ENCODE measurements at regions of chr10 and their contacts with region 1.

Region 1: DNA sequence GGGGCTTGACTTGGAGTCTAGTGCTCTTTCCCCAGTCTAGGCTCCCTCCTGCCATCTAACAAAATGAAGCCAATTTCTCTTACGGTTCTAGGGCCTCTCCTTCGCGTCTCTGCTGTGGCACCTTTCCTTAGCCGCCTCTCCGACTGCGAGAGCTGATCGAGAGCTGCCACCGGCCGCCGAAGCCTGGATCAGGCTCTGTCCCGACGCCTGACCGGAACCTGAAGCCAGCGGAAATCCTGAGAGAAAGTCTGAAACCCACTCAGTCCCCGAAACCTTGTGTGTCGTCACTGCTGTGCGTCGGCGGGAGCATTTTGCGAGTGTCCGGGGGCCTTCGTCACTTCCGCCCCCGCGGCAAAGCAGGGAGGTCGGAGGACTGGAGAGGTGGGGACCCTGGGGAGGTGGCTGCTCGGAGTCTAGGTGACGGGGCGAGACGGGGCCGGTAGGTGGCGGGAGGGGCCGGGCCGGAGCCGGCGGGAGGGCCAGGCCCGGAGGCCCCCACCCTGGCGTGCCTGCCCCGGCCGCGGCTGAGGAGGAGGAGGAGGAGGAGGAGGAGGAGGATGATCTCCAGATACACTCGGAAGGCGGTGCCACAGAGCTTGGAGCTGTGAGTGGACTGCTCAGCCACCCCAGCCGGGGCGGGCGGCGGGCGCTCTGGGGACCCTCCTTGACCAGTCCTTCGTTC is at the starts of genes ECD and FAM149B1:
- DNase-seq: peak; percentile 88 to 96 (median 93)
- H3K4me3 ChIP-seq: peak within 1 kb of the TSS; percentile 67 to 100 (median 94)
- H3K27ac ChIP-seq: peak within 1 kb of the TSS; percentile 75 to 98 (median 94)
- H3K27me3 ChIP-seq: no peaks in the 10 kb centered on the region
- CTCF ChIP-seq: peak in 44 of 56 donors; percentile 4 to 56 (median 34)
- total RNA-seq, gene ECD: 25.0 to 44.1 (median 33.4) TPM
- total RNA-seq, gene FAM149B1: 21.7 to 41.9 (median 29.3) TPM

Region 2: GRCh38 chr10:72354478-72355213 is 813.3 kb before region 1 on chr10 and contains the start of gene DNAJB12:
- intact Hi-C with region 1: loop called in 1 of 2 experiments (anchors 10 kb)
- DNase-seq: peak; percentile 79 to 93 (median 88)
- H3K4me3 ChIP-seq: peak within 1 kb of the TSS; percentile 66 to 100 (median 91)
- H3K27ac ChIP-seq: peak within 1 kb of the TSS; percentile 89 to 100 (median 98)
- H3K27me3 ChIP-seq: no peaks in the 10 kb centered on the region
- CTCF ChIP-seq: peak in 34 of 56 donors; percentile 3 to 52 (median 24)
- total RNA-seq, gene DNAJB12: 25.5 to 44.3 (median 34.1) TPM

Region 3: GRCh38 chr10:72364239-72364777 is 803.6 kb before region 1 on chr10:
- intact Hi-C with region 1: loop called (anchors 5 to 10 kb)
- DNase-seq: peak; percentile 71 to 89 (median 84)
- H3K4me3 ChIP-seq: peak overlapping the region in 50 of 59 donors; percentile 1 to 59 (median 32)
- H3K27ac ChIP-seq: peak overlapping the region in 35 of 59 donors; percentile 23 to 88 (median 55)
- H3K27me3 ChIP-seq: no peaks in the 10 kb centered on the region
- CTCF ChIP-seq: peak; percentile 65 to 98 (median 94)

Region 4: DNA sequence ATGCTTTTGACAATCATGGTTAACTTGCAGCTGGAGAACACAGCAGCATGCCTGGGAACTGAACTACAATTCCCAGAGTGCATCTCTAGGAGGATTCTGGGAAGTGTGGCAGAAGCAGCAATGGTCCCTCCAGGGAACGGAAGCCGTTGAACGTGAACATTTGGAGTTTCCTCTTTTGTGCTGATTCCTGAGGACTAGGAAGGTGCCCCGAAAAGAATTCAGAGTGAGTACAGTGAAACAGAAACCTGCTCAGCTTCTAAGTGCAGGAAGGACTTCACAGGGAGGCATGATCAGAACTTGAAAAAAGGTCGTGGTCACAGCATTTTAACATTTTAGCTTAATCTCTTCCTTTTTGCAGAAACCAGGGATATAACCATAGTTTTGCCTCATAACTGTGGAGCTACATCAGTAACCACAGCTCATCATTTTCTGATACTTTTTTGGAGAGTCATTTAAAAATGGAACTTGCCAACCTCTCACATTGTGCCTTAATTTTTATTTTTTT is 57.5 kb before region 1 on chr10 and contains the start of gene NUDT13:
- intact Hi-C with region 1: loop called in 1 of 2 experiments (anchors 1 kb)
- DNase-seq: peak in 9 of 10 donors; percentile 59 to 88 (median 70)
- H3K4me3 ChIP-seq: peak within 1 kb of the TSS; percentile 34 to 79 (median 62)
- H3K27ac ChIP-seq: peak within 1 kb of the TSS; percentile 6 to 95 (median 84)
- H3K27me3 ChIP-seq: no peaks in the 10 kb centered on the region
- CTCF ChIP-seq: peak in 19 of 56 donors; percentile 7 to 44 (median 25)
- total RNA-seq, gene NUDT13: 0.25 to 4.0 (median 1.3) TPM

Region 5: GRCh38 chr10:73141603-73142002 is 26.3 kb before region 1 on chr10:
- intact Hi-C with region 1: no loop called
- DNase-seq: no peak
- H3K4me3 ChIP-seq: no peak overlapping the region
- H3K27ac ChIP-seq: no peak overlapping the region
- H3K27me3 ChIP-seq: no peaks in the 10 kb centered on the region
- CTCF ChIP-seq: no peak

Region 6: GRCh38 chr10:73190188-73190587 is 22.3 kb after region 1 on chr10:
- intact Hi-C with region 1: no loop called
- DNase-seq: no peak
- H3K4me3 ChIP-seq: no peak overlapping the region
- H3K27ac ChIP-seq: no peak overlapping the region
- H3K27me3 ChIP-seq: no peaks in the 10 kb centered on the region
- CTCF ChIP-seq: no peak

Region 7: DNA sequence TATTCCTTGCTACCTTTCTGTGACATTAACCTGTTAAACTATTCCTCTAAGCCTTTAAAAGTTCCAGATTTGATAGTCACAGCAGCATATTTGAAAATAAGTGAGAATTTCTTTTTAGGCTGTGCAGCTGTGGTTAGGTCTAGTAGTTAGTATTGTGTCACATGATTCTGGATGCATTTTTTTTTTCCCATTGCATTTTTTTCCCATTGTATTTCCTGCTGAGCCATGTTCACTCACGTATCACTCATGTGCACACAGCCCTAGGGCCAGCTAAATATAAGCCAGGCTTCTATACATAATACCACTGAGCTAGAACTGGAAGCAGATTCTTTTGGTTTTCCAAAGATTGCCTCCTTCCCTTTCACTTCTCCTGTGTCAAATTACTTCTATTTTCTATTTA is 41.8 kb after region 1 on chr10:
- intact Hi-C with region 1: no loop called
- DNase-seq: no peak
- H3K4me3 ChIP-seq: no peak overlapping the region
- H3K27ac ChIP-seq: peak overlapping the region in 2 of 59 donors; percentile 9
- H3K27me3 ChIP-seq: no peaks in the 10 kb centered on the region
- CTCF ChIP-seq: no peak

Region 8: GRCh38 chr10:73246783-73247508 is 79.0 kb after region 1 on chr10 and contains the start of gene DNAJC9:
- intact Hi-C with region 1: loop called in 1 of 2 experiments (anchors 10 kb)
- DNase-seq: peak; percentile 93 to 97 (median 96)
- H3K4me3 ChIP-seq: peak within 1 kb of the TSS; percentile 72 to 100 (median 94)
- H3K27ac ChIP-seq: peak within 1 kb of the TSS in 55 of 59 donors; percentile 1 to 89 (median 65)
- H3K27me3 ChIP-seq: no peaks in the 10 kb centered on the region
- CTCF ChIP-seq: peak in 34 of 56 donors; percentile 11 to 57 (median 30)
- total RNA-seq, gene DNAJC9: 17.3 to 49.8 (median 28.6) TPM